ENCODE measurements at regions of chr22 and their contacts with region 1.

Region 1: DNA sequence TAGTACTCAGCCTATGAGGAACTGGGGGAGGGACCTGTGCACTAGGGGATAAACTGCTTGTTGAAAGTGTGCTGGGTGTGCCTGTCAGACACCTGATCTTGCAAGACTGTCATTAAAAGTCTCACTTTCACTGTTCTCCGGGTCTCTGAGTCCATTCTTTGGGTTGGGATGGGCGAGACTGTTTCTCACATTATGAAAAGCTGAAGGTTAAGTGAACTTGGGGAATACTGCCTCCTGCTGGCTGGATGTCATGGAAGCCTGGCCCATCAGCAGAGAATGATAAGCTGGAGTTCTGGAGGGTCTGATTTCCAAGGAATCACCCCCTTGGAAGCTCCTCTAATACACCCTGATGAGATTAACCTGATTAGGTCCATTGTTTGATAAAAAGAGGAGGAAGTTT is 9.0 kb upstream of the VPREB1 start:
- DNase-seq: peak; percentile 4 to 57 (median 35)
- H3K4me3 ChIP-seq: no peak overlapping the region
- H3K4me3 Mint-ChIP-seq: no peak overlapping the region
- H3K27ac ChIP-seq: no peak overlapping the region
- H3K27ac Mint-ChIP-seq: no peak overlapping the region
- H3K4me1 ChIP-seq: no peaks in the 10 kb centered on the region
- H3K4me1 Mint-ChIP-seq: peaks cover 0 to 3% (median 0%) of the 10 kb centered on the region in 3 donors
- H3K27me3 ChIP-seq: no peaks in the 10 kb centered on the region
- H3K27me3 Mint-ChIP-seq: peaks cover 9 to 10% of the 10 kb centered on the region in 2 donors

Region 2: GRCh38 chr22:22207845-22208564 is 27.6 kb before region 1 on chr22:
- CTCF ChIA-PET with region 1: interaction called, 16 read pairs
- POLR2A ChIA-PET with region 1: no interaction called
- DNase-seq: peak; percentile 42 to 81 (median 64)
- H3K4me3 ChIP-seq: no peak overlapping the region
- H3K4me3 Mint-ChIP-seq: peak overlapping the region in 1 of 7 donors; percentile 9
- H3K27ac ChIP-seq: no peak overlapping the region
- H3K27ac Mint-ChIP-seq: peak overlapping the region in 4 of 8 donors; percentile 0 to 76 (median 54)
- H3K4me1 ChIP-seq: peaks cover 11% of the 10 kb centered on the region
- H3K4me1 Mint-ChIP-seq: peaks cover 12 to 33% (median 24%) of the 10 kb centered on the region in 3 donors
- H3K27me3 ChIP-seq: no peaks in the 10 kb centered on the region
- H3K27me3 Mint-ChIP-seq: peaks cover 1 to 3% of the 10 kb centered on the region in 2 donors

Measured in CD8-positive, alpha-beta memory T cell (primary cell).